ENCODE measurements at regions of chr6 and their contacts with region 1.

Region 1: DNA sequence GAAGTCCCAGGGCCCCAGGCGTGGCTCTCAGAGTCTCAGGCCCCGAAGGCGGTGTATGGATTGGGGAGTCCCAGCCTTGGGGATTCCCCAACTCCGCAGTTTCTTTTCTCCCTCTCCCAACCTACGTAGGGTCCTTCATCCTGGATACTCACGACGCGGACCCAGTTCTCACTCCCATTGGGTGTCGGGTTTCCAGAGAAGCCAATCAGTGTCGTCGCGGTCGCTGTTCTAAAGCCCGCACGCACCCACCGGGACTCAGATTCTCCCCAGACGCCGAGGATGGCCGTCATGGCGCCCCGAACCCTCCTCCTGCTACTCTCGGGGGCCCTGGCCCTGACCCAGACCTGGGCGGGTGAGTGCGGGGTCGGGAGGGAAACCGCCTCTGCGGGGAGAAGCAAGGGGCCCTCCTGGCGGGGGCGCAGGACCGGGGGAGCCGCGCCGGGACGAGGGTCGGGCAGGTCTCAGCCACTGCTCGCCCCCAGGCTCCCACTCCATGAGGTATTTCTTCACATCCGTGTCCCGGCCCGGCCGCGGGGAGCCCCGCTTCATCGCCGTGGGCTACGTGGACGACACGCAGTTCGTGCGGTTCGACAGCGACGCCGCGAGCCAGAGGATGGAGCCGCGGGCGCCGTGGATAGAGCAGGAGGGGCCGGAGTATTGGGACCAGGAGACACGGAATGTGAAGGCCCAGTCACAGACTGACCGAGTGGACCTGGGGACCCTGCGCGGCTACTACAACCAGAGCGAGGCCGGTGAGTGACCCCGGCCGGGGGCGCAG is at the start of gene HLA-A:
- DNase-seq: peak; percentile 97
- H3K4me3 Mint-ChIP-seq: peak within 1 kb of the TSS; percentile 97
- H3K27ac Mint-ChIP-seq: peak within 1 kb of the TSS; percentile 99
- H3K4me1 Mint-ChIP-seq: peaks cover 53% of the 10 kb centered on the region
- H3K27me3 Mint-ChIP-seq: no peaks in the 10 kb centered on the region
- total RNA-seq, gene HLA-A: 1,509 to 1,515 TPM

Region 2: GRCh38 chr6:29887819-29888776 is 54.4 kb before region 1 on chr6:
- CTCF ChIA-PET with region 1: no interaction called
- intact Hi-C with region 1: loop called (anchors 1 kb)
- DNase-seq: peak; percentile 87
- H3K4me3 Mint-ChIP-seq: peak overlapping the region; percentile 80
- H3K27ac Mint-ChIP-seq: peak overlapping the region; percentile 91
- H3K4me1 Mint-ChIP-seq: peaks cover 12% of the 10 kb centered on the region
- H3K27me3 Mint-ChIP-seq: no peaks in the 10 kb centered on the region

Region 3: GRCh38 chr6:29964887-29965562 is 22.6 kb after region 1 on chr6:
- CTCF ChIA-PET with region 1: interaction called, 3 read pairs
- intact Hi-C with region 1: loop called (anchors 1 kb)
- DNase-seq: peak; percentile 91
- H3K4me3 Mint-ChIP-seq: peak overlapping the region; percentile 86
- H3K27ac Mint-ChIP-seq: peak overlapping the region; percentile 98
- H3K4me1 Mint-ChIP-seq: peaks cover 41% of the 10 kb centered on the region
- H3K27me3 Mint-ChIP-seq: no peaks in the 10 kb centered on the region

Region 4: DNA sequence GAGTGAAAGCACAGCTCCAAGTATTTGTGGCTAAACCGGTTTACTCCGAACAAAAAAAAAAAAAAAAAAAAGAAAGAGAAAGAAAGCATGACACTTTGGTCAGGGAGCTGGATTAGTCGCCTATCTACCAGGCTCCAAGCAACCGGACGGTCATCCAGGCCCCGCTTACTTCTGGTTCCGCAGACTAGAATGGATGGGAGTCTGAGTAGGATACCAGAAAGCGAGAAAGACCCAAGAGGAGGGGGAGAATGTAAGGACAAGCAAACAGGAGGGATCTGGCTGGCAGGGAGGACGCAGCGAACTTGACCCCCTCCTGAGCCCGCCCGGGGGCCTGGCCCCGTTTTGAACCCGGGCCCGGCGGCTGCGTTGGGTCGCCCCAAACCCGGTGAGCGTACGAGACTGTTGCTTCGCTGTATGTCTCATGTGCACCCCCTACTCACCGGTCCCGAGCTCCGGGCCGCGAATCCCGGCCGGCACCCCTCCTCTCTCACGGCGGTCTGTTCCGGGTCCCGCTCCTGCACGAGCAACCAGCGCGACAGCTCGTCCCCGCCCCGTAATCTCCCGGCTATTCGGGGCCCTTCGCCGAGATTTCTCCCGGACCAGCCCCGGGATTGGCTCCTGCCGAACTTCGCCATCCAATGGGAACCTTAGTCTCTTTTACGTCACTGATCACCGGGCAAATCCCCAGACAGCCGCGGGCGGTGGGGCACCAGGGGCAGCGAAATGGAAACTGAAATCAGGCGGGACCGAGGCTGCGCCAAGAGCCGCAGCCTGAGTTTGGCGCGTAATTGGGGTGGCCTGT is 270.6 kb after region 1 on chr6 and contains the start of gene TRIM26:
- CTCF ChIA-PET with region 1: no interaction called
- intact Hi-C with region 1: loop called (anchors 5 kb)
- DNase-seq: peak; percentile 99
- H3K4me3 Mint-ChIP-seq: peak within 1 kb of the TSS; percentile 94
- H3K27ac Mint-ChIP-seq: peak within 1 kb of the TSS; percentile 99
- H3K4me1 Mint-ChIP-seq: peaks cover 41% of the 10 kb centered on the region
- H3K27me3 Mint-ChIP-seq: no peaks in the 10 kb centered on the region
- total RNA-seq, gene TRIM26: 36.8 to 38.7 TPM

Region 5: DNA sequence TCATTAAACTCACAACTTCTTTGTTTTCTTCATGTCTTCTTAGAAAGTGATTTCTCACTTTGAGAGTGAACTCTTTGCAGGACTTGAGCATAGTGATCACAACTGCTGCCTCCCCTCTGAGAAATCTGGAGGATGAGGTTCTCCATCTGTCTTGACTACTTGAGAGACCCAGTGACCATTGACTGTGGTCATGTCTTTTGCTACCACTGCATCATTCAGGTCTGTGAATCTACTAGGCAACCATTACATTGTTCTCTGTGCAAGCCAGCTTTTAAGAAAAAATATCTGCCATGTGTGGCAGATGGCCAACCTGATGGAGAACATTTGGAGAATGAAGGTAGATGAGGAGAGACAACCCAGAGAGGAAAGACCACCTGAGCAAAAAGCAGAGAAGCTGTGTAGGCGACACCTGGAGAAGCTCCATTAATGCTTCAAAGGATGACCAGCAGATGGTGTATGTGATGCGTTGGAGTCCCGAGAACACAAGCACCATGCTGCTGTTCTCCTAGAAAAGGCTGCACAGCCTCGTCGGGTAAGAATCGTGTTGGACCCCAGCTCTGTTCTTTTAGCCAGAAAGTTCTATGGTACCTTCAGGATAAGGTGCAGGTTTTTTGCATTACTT is 295.8 kb after region 1 on chr6:
- CTCF ChIA-PET with region 1: no interaction called
- intact Hi-C with region 1: no loop called
- DNase-seq: peak; percentile 55
- H3K4me3 Mint-ChIP-seq: no peak overlapping the region
- H3K27ac Mint-ChIP-seq: no peak overlapping the region
- H3K4me1 Mint-ChIP-seq: no peaks in the 10 kb centered on the region
- H3K27me3 Mint-ChIP-seq: peaks cover 11% of the 10 kb centered on the region